WTC11 (cell line): ENCODE measurements at regions of chr14 and their contacts with region 1.

Region 1: GRCh38 chr14:30283826-30284446 is 275.0 kb upstream of the G2E3 start:
- DNase-seq: peak; percentile 73
- ATAC-seq: peak; percentile 93
- H3K4me3 Mint-ChIP-seq: no peak overlapping the region
- H3K27ac Mint-ChIP-seq: no peak overlapping the region
- H3K4me1 Mint-ChIP-seq: no peaks in the 10 kb centered on the region
- H3K27me3 Mint-ChIP-seq: no peaks in the 10 kb centered on the region
- CTCF ChIP-seq: no peak; the same call in 1 of the 2 replicates

Region 2: DNA sequence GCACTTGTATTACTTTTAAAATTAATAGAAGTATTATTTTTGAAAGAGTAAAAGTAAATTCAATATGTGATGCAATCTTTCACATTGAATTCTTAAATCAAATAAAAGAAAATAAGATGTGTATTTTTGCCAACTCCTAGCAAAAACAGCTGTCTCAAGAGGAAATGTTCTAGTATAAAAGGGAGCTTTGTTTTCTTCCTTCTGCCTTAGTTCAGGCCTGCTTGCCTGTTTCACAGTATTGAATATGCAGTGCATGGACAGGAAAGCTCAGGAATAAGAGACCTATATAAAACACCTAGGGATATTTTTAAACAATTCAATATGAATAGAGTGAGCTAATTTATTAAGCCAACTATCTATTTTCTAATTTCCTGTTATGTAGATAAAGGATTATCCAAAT is 19.8 kb before region 1 on chr14:
- CTCF ChIA-PET with region 1: interaction called, 46 read pairs
- POLR2A ChIA-PET with region 1: no interaction called
- DNase-seq: no peak
- ATAC-seq: no peak
- H3K4me3 Mint-ChIP-seq: no peak overlapping the region
- H3K27ac Mint-ChIP-seq: no peak overlapping the region
- H3K4me1 Mint-ChIP-seq: peaks cover 37% of the 10 kb centered on the region
- H3K27me3 Mint-ChIP-seq: no peaks in the 10 kb centered on the region
- CTCF ChIP-seq: no peak

Region 3: GRCh38 chr14:30296931-30297405 is 13.0 kb after region 1 on chr14:
- CTCF ChIA-PET with region 1: interaction called, 26 read pairs
- POLR2A ChIA-PET with region 1: interaction called, 3 read pairs
- DNase-seq: no peak
- ATAC-seq: no peak
- H3K4me3 Mint-ChIP-seq: no peak overlapping the region
- H3K27ac Mint-ChIP-seq: 0 out of 2 replicates have a peak overlapping the region, but pooled peaks have one; percentile 10
- H3K4me1 Mint-ChIP-seq: peaks cover 4% of the 10 kb centered on the region
- H3K27me3 Mint-ChIP-seq: no peaks in the 10 kb centered on the region
- CTCF ChIP-seq: no peak